B cell (primary cell): ENCODE measurements at regions of chr10 and their contacts with region 1.

Region 1: GRCh38 chr10:59865101-59865500 is 41.3 kb downstream of the CCDC6 start:
- DNase-seq: peak; percentile 69
- ATAC-seq: peak; percentile 74
- H3K4me3 ChIP-seq: no peak overlapping the region
- H3K4me3 Mint-ChIP-seq: peak overlapping the region; percentile 37
- H3K27ac ChIP-seq: peak overlapping the region in 1 of 2 donors; percentile 5
- H3K27ac Mint-ChIP-seq: peak overlapping the region; percentile 64
- H3K4me1 ChIP-seq: peaks cover 19 to 29% of the 10 kb centered on the region in 2 donors
- H3K4me1 Mint-ChIP-seq: peaks cover 63% of the 10 kb centered on the region
- H3K27me3 ChIP-seq: no peaks in the 10 kb centered on the region
- H3K27me3 Mint-ChIP-seq: no peaks in the 10 kb centered on the region
- CTCF ChIP-seq: peak; percentile 75

Region 2: DNA sequence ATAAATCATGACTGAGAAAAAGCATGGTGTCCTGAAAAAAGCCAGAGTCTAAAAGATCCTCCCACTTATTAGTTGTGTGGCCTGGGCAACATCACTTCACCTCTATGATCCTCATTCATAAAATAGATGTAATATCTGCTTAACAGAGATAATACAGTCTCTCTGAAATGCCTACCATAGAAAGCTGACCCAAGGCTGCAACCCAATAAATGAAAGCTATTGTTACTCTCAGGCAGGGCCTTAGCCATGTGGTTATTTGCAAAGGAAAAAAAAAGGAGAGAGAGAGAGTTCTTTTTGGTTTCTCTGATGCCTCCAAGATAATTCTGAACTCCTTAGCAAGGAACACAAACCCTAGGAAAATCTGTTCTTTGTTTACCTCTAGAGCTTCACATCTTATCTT is 510.7 kb before region 1 on chr10:
- CTCF ChIA-PET with region 1: no interaction called
- POLR2A ChIA-PET with region 1: no interaction called
- intact Hi-C with region 1: no loop called
- DNase-seq: no peak
- ATAC-seq: no peak
- H3K4me3 ChIP-seq: no peak overlapping the region
- H3K4me3 Mint-ChIP-seq: no peak overlapping the region
- H3K27ac ChIP-seq: no peak overlapping the region
- H3K27ac Mint-ChIP-seq: no peak overlapping the region
- H3K4me1 ChIP-seq: no peaks in the 10 kb centered on the region
- H3K4me1 Mint-ChIP-seq: no peaks in the 10 kb centered on the region
- H3K27me3 ChIP-seq: peaks cover 0 to 3% (median 0%) of the 10 kb centered on the region in 4 experiments
- H3K27me3 Mint-ChIP-seq: peaks cover 3% of the 10 kb centered on the region
- CTCF ChIP-seq: no peak

Region 3: GRCh38 chr10:59847326-59847725 is 17.8 kb before region 1 on chr10:
- CTCF ChIA-PET with region 1: interaction called, 44 read pairs
- POLR2A ChIA-PET with region 1: interaction called, 6 read pairs
- intact Hi-C with region 1: no loop called
- DNase-seq: no peak
- ATAC-seq: no peak
- H3K4me3 ChIP-seq: no peak overlapping the region
- H3K4me3 Mint-ChIP-seq: no peak overlapping the region
- H3K27ac ChIP-seq: no peak overlapping the region
- H3K27ac Mint-ChIP-seq: no peak overlapping the region
- H3K4me1 ChIP-seq: peaks cover 9 to 12% of the 10 kb centered on the region in 2 donors
- H3K4me1 Mint-ChIP-seq: peaks cover 29% of the 10 kb centered on the region
- H3K27me3 ChIP-seq: no peaks in the 10 kb centered on the region
- H3K27me3 Mint-ChIP-seq: no peaks in the 10 kb centered on the region
- CTCF ChIP-seq: no peak

Region 4: GRCh38 chr10:59891349-59892335 is 26.5 kb after region 1 on chr10:
- CTCF ChIA-PET with region 1: interaction called, 17 read pairs
- POLR2A ChIA-PET with region 1: no interaction called
- intact Hi-C with region 1: no loop called
- DNase-seq: no peak
- ATAC-seq: peak; percentile 43
- H3K4me3 ChIP-seq: peak overlapping the region in 2 of 5 experiments; percentile 3 to 52
- H3K4me3 Mint-ChIP-seq: peak overlapping the region; percentile 62
- H3K27ac ChIP-seq: peak overlapping the region; percentile 5 to 44
- H3K27ac Mint-ChIP-seq: peak overlapping the region; percentile 89
- H3K4me1 ChIP-seq: peaks cover 48 to 72% of the 10 kb centered on the region in 2 donors
- H3K4me1 Mint-ChIP-seq: peaks cover 89% of the 10 kb centered on the region
- H3K27me3 ChIP-seq: no peaks in the 10 kb centered on the region
- H3K27me3 Mint-ChIP-seq: no peaks in the 10 kb centered on the region
- CTCF ChIP-seq: no peak

Region 5: GRCh38 chr10:60032723-60033122 is 167.6 kb after region 1 on chr10:
- CTCF ChIA-PET with region 1: interaction called, 44 read pairs
- POLR2A ChIA-PET with region 1: no interaction called
- intact Hi-C with region 1: loop called (anchors 1 kb)
- DNase-seq: peak; percentile 67
- ATAC-seq: peak; percentile 36
- H3K4me3 ChIP-seq: no peak overlapping the region
- H3K4me3 Mint-ChIP-seq: no peak overlapping the region
- H3K27ac ChIP-seq: no peak overlapping the region
- H3K27ac Mint-ChIP-seq: no peak overlapping the region
- H3K4me1 ChIP-seq: peaks cover 6 to 7% of the 10 kb centered on the region in 2 donors
- H3K4me1 Mint-ChIP-seq: peaks cover 10% of the 10 kb centered on the region
- H3K27me3 ChIP-seq: no peaks in the 10 kb centered on the region
- H3K27me3 Mint-ChIP-seq: no peaks in the 10 kb centered on the region
- CTCF ChIP-seq: peak; percentile 67

Region 6: GRCh38 chr10:60208676-60209269 is 343.7 kb after region 1 on chr10:
- CTCF ChIA-PET with region 1: interaction called, 19 read pairs
- POLR2A ChIA-PET with region 1: no interaction called
- intact Hi-C with region 1: loop called (anchors 10 kb)
- DNase-seq: peak; percentile 36
- ATAC-seq: no peak
- H3K4me3 ChIP-seq: no peak overlapping the region
- H3K4me3 Mint-ChIP-seq: no peak overlapping the region
- H3K27ac ChIP-seq: no peak overlapping the region
- H3K27ac Mint-ChIP-seq: no peak overlapping the region
- H3K4me1 ChIP-seq: peaks cover 14 to 26% of the 10 kb centered on the region in 2 donors
- H3K4me1 Mint-ChIP-seq: peaks cover 37% of the 10 kb centered on the region
- H3K27me3 ChIP-seq: no peaks in the 10 kb centered on the region
- H3K27me3 Mint-ChIP-seq: no peaks in the 10 kb centered on the region
- CTCF ChIP-seq: peak; percentile 67